CD8-positive, alpha-beta T cell (primary cell): ENCODE measurements at regions of chr14 and their contacts with region 1.

Region 1: DNA sequence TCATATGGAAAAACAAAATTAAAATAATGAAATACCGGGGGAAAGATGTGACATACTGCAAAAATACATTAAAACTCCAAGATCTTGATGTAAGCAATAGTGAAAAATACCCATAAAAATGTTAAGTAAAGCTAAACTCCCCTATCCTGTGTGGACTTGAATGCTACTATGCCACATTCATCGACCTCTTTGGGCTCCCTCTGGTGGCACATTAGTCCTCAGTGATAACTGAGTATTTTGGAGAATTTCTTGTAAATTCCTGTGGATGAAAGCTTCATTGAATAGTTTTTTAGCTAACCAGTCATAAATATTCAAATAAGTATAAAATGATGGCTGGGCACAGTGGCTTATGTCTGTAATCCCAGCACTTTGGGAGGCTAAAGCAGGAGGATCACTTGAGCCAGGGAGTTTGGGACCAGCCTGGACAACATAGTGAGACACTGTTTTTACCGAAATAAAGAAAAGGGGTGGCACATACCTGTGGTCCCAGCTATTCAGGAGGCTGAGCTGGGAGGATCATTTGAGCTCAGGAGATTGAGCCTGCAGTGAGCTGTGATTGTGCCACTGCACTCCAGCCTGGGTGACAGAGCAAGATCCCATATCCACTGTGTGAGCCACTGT is 42.4 kb upstream of the SGPP1 start:
- DNase-seq: peak; percentile 6 to 79 (median 60)
- ATAC-seq: peak; percentile 90
- H3K4me3 ChIP-seq: no peak overlapping the region
- H3K4me3 Mint-ChIP-seq: no peak overlapping the region
- H3K27ac ChIP-seq: no peak overlapping the region
- H3K27ac Mint-ChIP-seq: no peak overlapping the region
- H3K4me1 ChIP-seq: no peaks in the 10 kb centered on the region
- H3K4me1 Mint-ChIP-seq: peaks cover 3% of the 10 kb centered on the region
- H3K27me3 ChIP-seq: no peaks in the 10 kb centered on the region
- H3K27me3 Mint-ChIP-seq: no peaks in the 10 kb centered on the region
- CTCF ChIP-seq: peak; percentile 70

Region 2: GRCh38 chr14:63375771-63376170 is 394.5 kb before region 1 on chr14:
- CTCF ChIA-PET with region 1: no interaction called
- POLR2A ChIA-PET with region 1: no interaction called
- intact Hi-C with region 1: no loop called
- DNase-seq: no peak
- ATAC-seq: no peak
- H3K4me3 ChIP-seq: no peak overlapping the region
- H3K4me3 Mint-ChIP-seq: no peak overlapping the region
- H3K27ac ChIP-seq: no peak overlapping the region
- H3K27ac Mint-ChIP-seq: no peak overlapping the region
- H3K4me1 ChIP-seq: no peaks in the 10 kb centered on the region
- H3K4me1 Mint-ChIP-seq: no peaks in the 10 kb centered on the region
- H3K27me3 ChIP-seq: no peaks in the 10 kb centered on the region
- H3K27me3 Mint-ChIP-seq: no peaks in the 10 kb centered on the region
- CTCF ChIP-seq: no peak

Region 3: GRCh38 chr14:63388763-63389431 is 381.4 kb before region 1 on chr14:
- CTCF ChIA-PET with region 1: interaction called, 16 read pairs
- POLR2A ChIA-PET with region 1: no interaction called
- intact Hi-C with region 1: loop called (anchors 1 kb)
- DNase-seq: peak; percentile 15 to 63 (median 44)
- ATAC-seq: peak; percentile 75
- H3K4me3 ChIP-seq: no peak overlapping the region
- H3K4me3 Mint-ChIP-seq: no peak overlapping the region
- H3K27ac ChIP-seq: no peak overlapping the region
- H3K27ac Mint-ChIP-seq: no peak overlapping the region
- H3K4me1 ChIP-seq: no peaks in the 10 kb centered on the region
- H3K4me1 Mint-ChIP-seq: peaks cover 5% of the 10 kb centered on the region
- H3K27me3 ChIP-seq: no peaks in the 10 kb centered on the region
- H3K27me3 Mint-ChIP-seq: no peaks in the 10 kb centered on the region
- CTCF ChIP-seq: peak; percentile 57

Region 4: DNA sequence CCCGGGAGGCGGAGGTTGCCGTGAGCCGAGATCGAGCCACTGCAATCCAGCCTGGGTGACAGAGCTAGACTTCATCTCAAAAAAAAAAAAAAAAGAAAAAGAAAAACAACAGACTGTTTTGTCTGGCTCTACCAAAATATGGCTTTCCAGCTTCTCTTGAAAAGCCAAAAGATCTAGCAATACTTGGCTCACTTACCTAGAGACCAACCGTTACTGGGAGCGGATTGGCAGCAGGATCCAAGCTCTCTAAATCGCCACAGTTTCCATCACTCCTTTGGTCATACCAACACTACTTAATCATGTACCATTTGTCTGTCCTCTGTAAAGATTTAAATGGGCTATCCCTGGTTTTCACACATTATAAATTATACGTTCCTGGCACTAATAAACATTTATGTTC is 364.0 kb before region 1 on chr14:
- CTCF ChIA-PET with region 1: no interaction called
- POLR2A ChIA-PET with region 1: no interaction called
- intact Hi-C with region 1: no loop called
- DNase-seq: no peak
- ATAC-seq: no peak
- H3K4me3 ChIP-seq: no peak overlapping the region
- H3K4me3 Mint-ChIP-seq: no peak overlapping the region
- H3K27ac ChIP-seq: no peak overlapping the region
- H3K27ac Mint-ChIP-seq: no peak overlapping the region
- H3K4me1 ChIP-seq: no peaks in the 10 kb centered on the region
- H3K4me1 Mint-ChIP-seq: peaks cover 20% of the 10 kb centered on the region
- H3K27me3 ChIP-seq: no peaks in the 10 kb centered on the region
- H3K27me3 Mint-ChIP-seq: no peaks in the 10 kb centered on the region
- CTCF ChIP-seq: no peak

Region 5: DNA sequence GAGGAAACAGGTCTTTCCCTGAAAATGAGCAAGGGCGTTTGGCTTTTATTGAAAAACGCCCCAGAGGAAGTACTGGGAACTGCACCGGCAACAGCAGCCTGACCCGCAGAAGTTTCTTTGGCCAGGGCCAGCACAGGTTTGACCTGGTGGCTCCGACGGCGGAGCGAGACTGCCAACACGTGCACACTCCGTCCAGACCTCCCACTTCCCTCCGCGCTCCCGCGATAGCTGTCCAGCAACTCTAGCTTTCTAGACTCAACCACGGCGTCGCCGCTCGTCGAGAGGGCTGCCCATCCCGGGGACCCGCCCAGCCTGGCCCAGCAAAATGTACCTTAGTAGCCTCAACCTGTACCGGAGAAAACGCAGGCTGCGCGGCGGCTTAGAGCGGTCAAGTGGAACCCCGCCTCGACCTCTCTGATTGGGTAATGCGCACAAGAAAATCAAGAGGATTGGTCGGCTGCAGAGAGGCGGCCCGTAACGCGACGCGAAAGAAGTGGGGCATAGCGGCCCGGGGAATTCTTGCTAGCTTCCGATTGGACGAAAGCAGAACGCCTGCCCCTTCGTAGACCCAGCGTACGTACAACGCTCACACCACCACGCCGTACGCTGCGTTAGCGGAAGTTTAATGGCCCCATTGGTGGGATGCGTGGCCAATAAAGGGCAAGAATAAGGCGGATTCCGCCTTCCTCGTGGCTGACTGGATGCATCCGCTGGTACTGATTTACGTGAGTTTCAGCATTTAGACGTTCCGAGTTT is 128.6 kb before region 1 on chr14 and contains the start of gene WDR89:
- CTCF ChIA-PET with region 1: interaction called, 26 read pairs
- POLR2A ChIA-PET with region 1: interaction called, 4 read pairs
- intact Hi-C with region 1: no loop called
- DNase-seq: peak; percentile 91 to 100 (median 94)
- ATAC-seq: peak; percentile 85
- H3K4me3 ChIP-seq: peak within 1 kb of the TSS; percentile 85 to 89
- H3K4me3 Mint-ChIP-seq: peak within 1 kb of the TSS; percentile 87
- H3K27ac ChIP-seq: peak within 1 kb of the TSS; percentile 94 to 99
- H3K27ac Mint-ChIP-seq: peak within 1 kb of the TSS; percentile 96
- H3K4me1 ChIP-seq: peaks cover 30% of the 10 kb centered on the region
- H3K4me1 Mint-ChIP-seq: peaks cover 57% of the 10 kb centered on the region
- H3K27me3 ChIP-seq: no peaks in the 10 kb centered on the region
- H3K27me3 Mint-ChIP-seq: no peaks in the 10 kb centered on the region
- CTCF ChIP-seq: peak; percentile 72
- total RNA-seq, gene WDR89: 13.6 to 13.7 TPM

Region 6: DNA sequence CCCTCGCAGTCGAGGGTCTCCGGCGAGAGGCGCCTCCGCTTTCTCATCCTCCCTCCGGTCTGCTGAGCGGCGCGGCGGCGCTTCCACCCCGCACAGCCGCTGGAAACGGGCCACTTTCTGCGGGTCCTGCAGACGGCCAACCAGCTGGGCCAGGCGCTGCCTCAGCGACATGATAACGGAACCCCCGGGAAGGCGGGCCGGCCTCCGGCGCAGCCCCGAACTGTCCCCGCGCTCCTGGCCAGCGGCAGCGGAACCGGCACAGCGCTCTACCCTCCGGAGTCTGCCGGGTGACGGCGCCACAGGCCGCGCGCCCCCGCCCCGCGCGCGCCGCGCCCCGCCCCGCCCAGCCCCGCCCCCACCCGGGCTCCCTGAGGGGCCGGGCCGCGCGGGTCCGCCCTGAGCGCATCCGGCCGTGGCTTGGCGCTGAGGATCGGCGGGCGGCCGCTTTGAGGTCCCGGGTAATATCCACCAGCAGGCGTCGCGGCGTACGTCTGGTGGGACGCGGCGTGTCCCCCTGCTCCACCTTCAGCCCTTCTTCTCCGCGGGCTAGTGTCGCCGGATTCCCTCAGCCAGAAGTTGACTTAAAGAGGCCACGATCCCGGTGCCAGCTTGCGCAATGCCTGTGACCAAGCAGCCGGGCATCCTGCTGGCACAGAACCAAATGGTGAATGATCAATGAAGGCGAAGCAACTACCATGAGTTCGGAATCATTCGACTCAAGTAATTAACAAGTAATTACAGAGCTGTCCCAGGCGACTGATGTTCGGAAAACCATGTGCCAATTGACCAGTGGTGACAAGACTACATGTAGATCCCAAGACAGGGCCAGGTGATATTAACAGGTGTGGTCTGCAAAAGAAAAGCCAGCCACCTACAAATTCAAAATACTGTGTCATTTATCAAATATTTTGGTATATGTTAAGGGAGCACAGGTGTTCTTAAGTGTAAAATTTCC is 42.2 kb before region 1 on chr14 and contains the start of gene SGPP1:
- CTCF ChIA-PET with region 1: interaction called, 36 read pairs
- POLR2A ChIA-PET with region 1: interaction called, 5 read pairs
- intact Hi-C with region 1: loop called (anchors 1 kb)
- DNase-seq: peak; percentile 62 to 92 (median 78)
- ATAC-seq: peak; percentile 90
- H3K4me3 ChIP-seq: peak within 1 kb of the TSS; percentile 83 to 88
- H3K4me3 Mint-ChIP-seq: peak within 1 kb of the TSS; percentile 98
- H3K27ac ChIP-seq: peak within 1 kb of the TSS; percentile 72 to 82
- H3K27ac Mint-ChIP-seq: peak within 1 kb of the TSS; percentile 94
- H3K4me1 ChIP-seq: peaks cover 31% of the 10 kb centered on the region
- H3K4me1 Mint-ChIP-seq: peaks cover 44% of the 10 kb centered on the region
- H3K27me3 ChIP-seq: no peaks in the 10 kb centered on the region
- H3K27me3 Mint-ChIP-seq: no peaks in the 10 kb centered on the region
- CTCF ChIP-seq: no peak
- total RNA-seq, gene SGPP1: 15.9 to 16.5 TPM